ENCODE measurements at regions of chr10 and their contacts with region 1.

Region 1: DNA sequence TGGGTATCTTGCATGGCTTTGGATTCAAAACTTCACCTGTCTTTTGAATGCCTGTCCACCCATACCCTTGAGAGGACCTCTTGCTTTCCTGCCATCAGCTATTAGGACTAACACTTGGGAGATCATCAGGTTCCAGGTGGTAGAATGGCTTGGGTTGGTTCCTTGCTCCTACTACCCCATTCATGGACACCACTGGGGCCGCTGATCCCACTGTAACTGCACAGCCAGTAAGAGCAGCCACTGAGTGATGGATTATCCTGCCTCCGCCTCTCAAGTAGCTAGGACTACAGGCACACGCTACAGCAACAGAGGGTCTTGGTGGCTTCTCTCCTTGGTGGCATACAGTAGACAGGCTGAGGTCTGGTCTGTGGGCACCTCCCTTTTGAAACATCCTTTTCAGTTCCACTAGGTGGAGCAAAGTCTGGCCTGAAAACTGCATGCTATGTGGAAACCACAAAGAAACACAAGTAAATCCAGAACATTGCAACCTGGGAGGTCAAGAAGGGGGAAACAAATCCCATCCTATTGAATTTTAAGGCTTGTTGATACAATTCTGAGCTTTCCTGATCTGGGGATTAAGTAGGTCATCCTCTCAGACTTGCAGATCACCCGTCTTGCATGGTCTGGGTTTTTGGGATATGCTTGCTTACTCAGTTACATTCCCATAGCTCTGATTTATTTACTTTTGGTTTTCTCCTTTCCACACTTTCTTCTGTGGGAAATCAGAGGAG is 9.4 kb downstream of the WBP1L start:
- DNase-seq: no peak
- H3K4me3 ChIP-seq: no peak overlapping the region
- H3K27ac ChIP-seq: no peak overlapping the region
- H3K4me1 ChIP-seq: no peaks in the 10 kb centered on the region
- H3K27me3 ChIP-seq: no peaks in the 10 kb centered on the region
- CTCF ChIP-seq: peak; percentile 15 to 77 (median 50)
- EP300 ChIP-seq: no peak
- POLR2A ChIP-seq: no peak
- RAD21 ChIP-seq: peak; percentile 59 to 75

Region 2: DNA sequence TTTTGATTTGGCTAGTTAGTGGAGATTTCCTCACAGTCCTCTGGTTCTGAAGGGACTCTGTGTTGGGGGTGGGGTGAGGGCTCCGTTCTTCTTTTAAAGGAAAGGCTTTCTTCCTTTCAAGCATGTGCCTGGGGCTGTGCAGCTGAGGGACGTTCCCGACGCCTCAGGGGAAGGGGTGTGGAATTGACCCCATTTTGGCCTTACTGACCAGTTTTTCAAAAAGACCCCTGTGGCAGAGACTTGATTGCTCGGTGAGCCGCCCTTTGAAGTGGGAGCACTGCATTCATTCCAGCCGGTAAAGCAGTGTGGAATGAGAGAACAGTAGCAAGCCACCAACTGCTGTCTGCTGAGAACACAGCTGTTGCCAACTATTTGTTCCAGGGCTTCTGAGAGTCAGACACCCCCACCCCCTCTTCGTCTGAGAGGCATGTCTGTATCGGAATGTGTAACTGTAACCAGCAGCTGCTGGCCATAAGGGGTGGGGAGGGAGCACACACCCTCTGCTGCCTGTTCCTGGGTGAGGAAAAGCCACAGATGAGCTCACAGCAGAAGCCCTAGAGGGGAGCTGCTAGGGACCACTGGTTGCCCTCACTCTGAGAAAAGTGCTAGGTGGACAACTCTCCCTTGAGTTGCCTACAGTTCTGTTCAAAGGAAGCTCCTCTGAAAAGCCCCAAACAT is 23.8 kb after region 1 on chr10:
- CTCF ChIA-PET with region 1: interaction called, 10 read pairs
- POLR2A ChIA-PET with region 1: interaction called, 5 read pairs
- DNase-seq: peak; percentile 43 to 67
- H3K4me3 ChIP-seq: peak overlapping the region in 3 of 4 experiments; percentile 8 to 41 (median 16); a peak in 4 of 8 replicates
- H3K27ac ChIP-seq: 0 out of 2 replicates have a peak overlapping the region, but pooled peaks have one; percentile 20
- H3K4me1 ChIP-seq: peaks cover 23 to 32% (median 30%) of the 10 kb centered on the region in 4 experiments
- H3K27me3 ChIP-seq: no peaks in the 10 kb centered on the region; a peak in 2 of 7 replicates
- CTCF ChIP-seq: no peak
- EP300 ChIP-seq: peak in 1 of 2 experiments; percentile 46; a peak in 1 of 3 replicates
- POLR2A ChIP-seq: no peak
- RAD21 ChIP-seq: no peak; a peak in 1 of 4 replicates

Region 3: GRCh38 chr10:102815790-102816549 is 62.9 kb after region 1 on chr10:
- CTCF ChIA-PET with region 1: interaction called, 26 read pairs
- POLR2A ChIA-PET with region 1: no interaction called
- DNase-seq: no peak
- H3K4me3 ChIP-seq: no peak overlapping the region
- H3K27ac ChIP-seq: no peak overlapping the region; the same call in 1 of the 2 replicates
- H3K4me1 ChIP-seq: peaks cover 0 to 7% (median 2%) of the 10 kb centered on the region in 4 experiments; a peak in 4 of 7 replicates
- H3K27me3 ChIP-seq: no peaks in the 10 kb centered on the region
- CTCF ChIP-seq: no peak
- EP300 ChIP-seq: no peak
- POLR2A ChIP-seq: no peak
- RAD21 ChIP-seq: no peak

Region 4: GRCh38 chr10:102835007-102835482 is 81.9 kb after region 1 on chr10:
- CTCF ChIA-PET with region 1: interaction called, 24 read pairs
- POLR2A ChIA-PET with region 1: no interaction called
- DNase-seq: peak; percentile 62 to 88
- H3K4me3 ChIP-seq: no peak overlapping the region
- H3K27ac ChIP-seq: no peak overlapping the region
- H3K4me1 ChIP-seq: 0 out of 7 replicates have a peak, but pooled peaks cover 0 to 2% (median 0%) of the 10 kb centered on the region in 4 experiments
- H3K27me3 ChIP-seq: no peaks in the 10 kb centered on the region; a peak in 1 of 7 replicates
- CTCF ChIP-seq: peak; percentile 88 to 96 (median 89)
- EP300 ChIP-seq: no peak
- POLR2A ChIP-seq: no peak
- RAD21 ChIP-seq: peak; percentile 96 to 99